Colonic mucosa (tissue), 4 donors: ENCODE measurements at regions of chr6 and their contacts with region 1.

Region 1: DNA sequence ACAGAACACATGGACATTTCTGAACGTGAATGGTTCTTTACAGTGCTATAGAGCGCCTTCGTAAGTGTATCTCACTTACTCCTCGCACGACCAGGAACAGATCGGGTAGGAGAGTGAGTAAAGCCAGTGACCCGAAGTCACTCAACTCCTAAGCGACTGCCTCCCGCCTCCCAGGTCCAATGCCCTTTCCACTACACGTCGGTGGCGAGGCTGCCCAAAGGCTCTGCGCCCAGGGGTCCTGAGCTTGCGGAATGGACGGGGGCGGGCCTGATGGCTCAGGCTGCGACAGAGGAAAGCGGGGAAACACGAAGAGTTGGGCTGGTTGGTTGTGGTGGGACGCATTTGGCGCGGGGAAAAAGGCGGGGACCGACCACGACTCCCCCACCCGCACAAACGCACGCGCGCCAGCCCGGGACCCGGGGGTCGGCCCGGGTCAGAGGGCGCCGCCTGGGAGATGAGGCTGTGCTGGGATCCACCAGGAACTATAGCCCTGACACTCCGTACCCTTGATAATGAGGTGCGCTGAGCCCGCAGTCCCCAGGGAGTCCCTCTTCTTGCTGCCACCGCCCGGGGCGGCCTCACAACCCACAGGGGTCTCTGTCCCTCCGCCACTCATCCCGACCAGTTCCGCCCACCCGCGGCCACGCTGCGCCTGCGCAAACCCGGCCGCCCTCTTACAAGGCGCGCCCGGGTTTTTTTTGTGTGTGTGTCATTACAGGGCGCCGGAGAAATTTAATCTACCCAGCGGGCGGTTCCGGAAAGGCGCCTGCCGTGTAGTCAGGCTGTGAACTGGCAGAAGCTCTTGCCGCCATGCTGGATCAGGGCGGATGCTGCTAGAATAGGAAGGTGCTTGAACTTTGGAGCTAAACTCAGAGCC is at the start of gene BLOC1S5:
- DNase-seq: peak; percentile 98
- H3K4me3 ChIP-seq: peak within 1 kb of the TSS; percentile 83
- H3K27ac ChIP-seq: peak within 1 kb of the TSS; percentile 85
- H3K4me1 ChIP-seq: peaks cover 4% of the 10 kb centered on the region
- H3K27me3 ChIP-seq: no peaks in the 10 kb centered on the region
- CTCF ChIP-seq: no peak
- total RNA-seq, gene BLOC1S5: 10.3 to 14.1 TPM

Region 2: DNA sequence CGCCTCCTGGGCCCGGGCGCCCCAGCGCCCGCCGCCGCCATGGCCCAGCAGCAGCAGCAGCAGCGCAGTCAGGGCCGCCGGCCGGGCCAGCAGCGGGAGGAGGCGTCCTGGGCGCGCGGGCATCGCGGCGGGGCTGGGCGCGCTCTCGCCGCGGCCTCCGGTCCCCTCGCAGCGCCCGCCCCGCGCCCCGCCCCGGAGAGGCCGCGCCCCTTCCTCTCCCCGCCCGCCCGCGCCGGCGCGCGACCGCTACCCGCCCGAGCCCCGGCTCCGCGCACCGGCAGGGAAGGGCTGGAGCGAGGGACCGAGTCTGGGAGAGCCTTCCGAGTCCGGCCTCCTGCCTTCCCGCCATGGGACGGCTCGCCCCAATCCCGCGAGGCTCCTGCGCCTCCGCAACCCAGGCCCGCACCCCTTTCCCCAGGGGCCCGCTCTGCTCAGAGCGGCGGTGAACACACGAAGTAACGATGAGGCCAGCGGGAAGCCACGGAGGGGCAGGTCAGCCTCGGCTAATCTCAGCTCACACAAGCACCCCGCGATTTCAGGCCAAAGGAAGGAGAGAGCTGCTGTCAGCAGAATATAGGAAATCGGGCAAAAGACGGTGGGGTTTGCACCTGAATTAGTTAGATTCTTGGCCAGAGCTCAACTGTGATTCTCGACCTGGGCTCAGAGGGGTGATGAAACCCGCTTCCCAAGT is 153.2 kb before region 1 on chr6 and contains the start of gene TXNDC5:
- intact Hi-C with region 1: loop called (anchors 10 kb)
- DNase-seq: peak; percentile 81
- H3K4me3 ChIP-seq: peak within 1 kb of the TSS; percentile 74
- H3K27ac ChIP-seq: peak within 1 kb of the TSS; percentile 67
- H3K4me1 ChIP-seq: no peaks in the 10 kb centered on the region
- H3K27me3 ChIP-seq: no peaks in the 10 kb centered on the region
- CTCF ChIP-seq: no peak
- total RNA-seq, gene TXNDC5: 82.2 to 126 TPM

Region 3: GRCh38 chr6:8329562-8329961 is 265.6 kb after region 1 on chr6:
- intact Hi-C with region 1: no loop called
- DNase-seq: no peak
- H3K4me3 ChIP-seq: no peak overlapping the region
- H3K27ac ChIP-seq: no peak overlapping the region
- H3K4me1 ChIP-seq: no peaks in the 10 kb centered on the region
- H3K27me3 ChIP-seq: no peaks in the 10 kb centered on the region
- CTCF ChIP-seq: no peak